ENCODE measurements at regions of chr2 and their contacts with region 1.

Region 1: GRCh38 chr2:42865884-42866881 is 73.8 kb upstream of the HAAO start:
- DNase-seq: peak; percentile 63 to 70
- ATAC-seq: peak; percentile 73 to 83 (median 77)
- H3K4me3 ChIP-seq: no peak overlapping the region
- H3K27ac ChIP-seq: peak overlapping the region; percentile 57 to 95 (median 76)
- H3K4me1 ChIP-seq: peaks cover 11 to 56% (median 24%) of the 10 kb centered on the region in 9 donors
- H3K27me3 ChIP-seq: no peaks in the 10 kb centered on the region
- CTCF ChIP-seq: no peak

Region 2: GRCh38 chr2:42117923-42118753 is 748.0 kb before region 1 on chr2:
- intact Hi-C with region 1: no loop called
- DNase-seq: no peak
- ATAC-seq: peak; percentile 62 to 95 (median 87)
- H3K4me3 ChIP-seq: no peak overlapping the region
- H3K27ac ChIP-seq: peak overlapping the region in 8 of 10 donors; percentile 6 to 75 (median 54)
- H3K4me1 ChIP-seq: peaks cover 0 to 46% (median 20%) of the 10 kb centered on the region in 9 donors
- H3K27me3 ChIP-seq: no peaks in the 10 kb centered on the region
- CTCF ChIP-seq: no peak

Region 3: DNA sequence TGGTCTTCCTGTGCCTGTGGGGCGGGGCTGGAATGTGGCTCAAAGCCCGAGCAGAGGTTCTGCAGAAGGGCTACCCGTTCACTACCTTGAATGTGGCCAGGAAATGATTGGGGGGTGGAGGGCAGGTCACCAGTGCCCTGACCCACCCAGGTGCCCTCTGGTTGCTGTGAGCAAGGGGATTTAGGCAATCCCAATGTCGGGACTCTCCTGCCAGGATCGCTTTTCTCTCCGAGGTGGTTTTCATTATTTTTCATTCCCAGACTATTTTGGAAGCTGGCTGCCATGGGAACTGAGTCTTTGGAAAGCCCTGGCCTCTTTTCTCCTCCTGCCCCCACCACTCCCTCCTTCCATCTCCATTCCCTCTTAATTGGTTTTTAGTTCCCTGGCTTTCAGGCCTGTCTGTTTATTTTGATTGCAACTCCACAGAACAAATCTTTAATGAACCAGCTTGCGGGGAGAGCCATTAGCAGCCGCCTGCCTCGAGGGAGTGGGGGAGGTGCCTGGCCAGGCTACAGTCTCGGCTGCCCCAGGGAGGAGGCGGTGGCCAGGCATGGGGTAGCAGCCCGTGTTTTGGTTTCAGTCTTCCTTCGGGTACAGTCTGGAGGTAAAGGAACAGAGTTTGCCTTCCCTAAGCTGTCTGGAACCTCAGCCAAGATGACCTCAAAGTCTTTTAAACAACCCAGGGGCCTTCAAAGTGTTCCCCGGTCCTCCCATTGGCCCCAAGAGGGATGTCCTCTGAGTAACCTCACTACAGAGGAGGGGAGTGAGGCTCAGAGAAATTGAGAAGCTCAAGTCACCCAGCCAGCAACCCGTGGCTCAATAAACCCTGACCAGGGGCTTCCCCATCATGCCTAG is 40.6 kb after region 1 on chr2:
- intact Hi-C with region 1: loop called in 3 of 10 experiments (anchors 5 kb)
- DNase-seq: peak; percentile 48 to 73
- ATAC-seq: peak; percentile 45 to 77 (median 63)
- H3K4me3 ChIP-seq: peak overlapping the region in 3 of 10 donors; percentile 3 to 32 (median 24)
- H3K27ac ChIP-seq: peak overlapping the region; percentile 60 to 92 (median 82)
- H3K4me1 ChIP-seq: peaks cover 35 to 74% (median 61%) of the 10 kb centered on the region in 9 donors
- H3K27me3 ChIP-seq: peaks cover 0 to 7% (median 0%) of the 10 kb centered on the region in 7 donors
- CTCF ChIP-seq: no peak

Region 4: GRCh38 chr2:42922790-42923579 is 56.8 kb after region 1 on chr2:
- intact Hi-C with region 1: loop called in 5 of 10 experiments (anchors 2 to 10 kb)
- DNase-seq: no peak
- ATAC-seq: peak in 1 of 8 donors; percentile 26
- H3K4me3 ChIP-seq: no peak overlapping the region
- H3K27ac ChIP-seq: peak overlapping the region; percentile 76 to 97 (median 89)
- H3K4me1 ChIP-seq: peaks cover 43 to 86% (median 63%) of the 10 kb centered on the region in 9 donors
- H3K27me3 ChIP-seq: no peaks in the 10 kb centered on the region
- CTCF ChIP-seq: no peak

Region 5: DNA sequence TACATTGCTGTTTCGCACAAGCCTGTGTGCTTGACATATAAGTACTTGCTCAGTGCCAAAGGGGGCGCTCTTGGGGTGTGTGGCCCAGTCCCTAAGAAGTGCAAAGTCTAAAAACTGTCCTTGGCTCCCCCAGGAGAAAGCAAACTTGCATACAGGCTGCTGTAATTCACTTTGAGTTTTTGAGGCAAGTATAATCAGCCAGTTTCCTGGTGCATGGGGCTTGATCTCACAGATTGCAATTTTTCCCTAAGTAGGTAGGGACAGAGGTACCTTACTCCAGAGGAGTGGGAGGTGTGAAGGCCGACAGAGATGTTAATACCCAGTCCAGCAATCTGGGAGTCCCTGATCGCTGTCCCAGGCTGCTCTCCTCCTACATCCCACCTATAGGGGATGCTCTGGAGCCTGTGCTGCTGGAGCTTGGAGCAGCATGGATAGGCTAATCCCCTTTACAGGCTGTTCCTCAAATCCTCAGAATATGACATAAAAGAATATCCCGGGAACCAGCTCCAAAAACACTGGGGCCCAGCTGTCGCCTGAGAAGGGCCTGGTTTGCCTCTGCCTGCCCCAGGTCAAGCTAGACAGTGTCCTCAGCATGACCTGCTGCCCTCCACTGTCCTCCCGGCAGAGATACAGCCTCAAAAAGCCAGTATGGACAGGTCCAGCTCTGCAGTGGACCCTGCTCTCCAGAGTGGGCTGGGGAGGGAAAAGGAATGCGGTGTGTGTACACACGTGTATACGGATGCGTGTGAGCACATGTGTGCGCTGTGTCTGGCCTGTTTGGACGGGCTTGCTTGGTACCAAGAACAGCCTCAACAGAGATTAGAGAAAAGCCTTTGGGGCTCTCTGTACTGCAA is 62.7 kb after region 1 on chr2:
- intact Hi-C with region 1: loop called in 8 of 10 experiments (anchors 2 to 10 kb)
- DNase-seq: no peak
- ATAC-seq: peak in 3 of 8 donors; percentile 10 to 16 (median 13)
- H3K4me3 ChIP-seq: no peak overlapping the region
- H3K27ac ChIP-seq: peak overlapping the region; percentile 65 to 97 (median 90)
- H3K4me1 ChIP-seq: peaks cover 71 to 100% (median 96%) of the 10 kb centered on the region in 9 donors
- H3K27me3 ChIP-seq: no peaks in the 10 kb centered on the region
- CTCF ChIP-seq: peak in 7 of 9 donors; percentile 22 to 59 (median 40)

Region 6: GRCh38 chr2:43051316-43051715 is 185.1 kb after region 1 on chr2:
- intact Hi-C with region 1: no loop called
- DNase-seq: no peak
- ATAC-seq: peak in 2 of 8 donors; percentile 9 to 18
- H3K4me3 ChIP-seq: no peak overlapping the region
- H3K27ac ChIP-seq: peak overlapping the region in 2 of 10 donors; percentile 11 to 24
- H3K4me1 ChIP-seq: peaks cover 0 to 51% (median 30%) of the 10 kb centered on the region in 9 donors
- H3K27me3 ChIP-seq: no peaks in the 10 kb centered on the region
- CTCF ChIP-seq: no peak

Measured in heart right ventricle (tissue), 16 donors.